Sigmoid colon (tissue), 7 donors: ENCODE measurements at regions of chr1 and their contacts with region 1.

Region 1: GRCh38 chr1:35377555-35377954 is 109.0 kb downstream of the ZMYM4 start:
- DNase-seq: no peak
- H3K4me3 ChIP-seq: no peak overlapping the region
- H3K27ac ChIP-seq: no peak overlapping the region
- H3K4me1 ChIP-seq: no peaks in the 10 kb centered on the region
- H3K27me3 ChIP-seq: no peaks in the 10 kb centered on the region
- CTCF ChIP-seq: no peak
- EP300 ChIP-seq: no peak
- POLR2A ChIP-seq: no peak

Region 2: DNA sequence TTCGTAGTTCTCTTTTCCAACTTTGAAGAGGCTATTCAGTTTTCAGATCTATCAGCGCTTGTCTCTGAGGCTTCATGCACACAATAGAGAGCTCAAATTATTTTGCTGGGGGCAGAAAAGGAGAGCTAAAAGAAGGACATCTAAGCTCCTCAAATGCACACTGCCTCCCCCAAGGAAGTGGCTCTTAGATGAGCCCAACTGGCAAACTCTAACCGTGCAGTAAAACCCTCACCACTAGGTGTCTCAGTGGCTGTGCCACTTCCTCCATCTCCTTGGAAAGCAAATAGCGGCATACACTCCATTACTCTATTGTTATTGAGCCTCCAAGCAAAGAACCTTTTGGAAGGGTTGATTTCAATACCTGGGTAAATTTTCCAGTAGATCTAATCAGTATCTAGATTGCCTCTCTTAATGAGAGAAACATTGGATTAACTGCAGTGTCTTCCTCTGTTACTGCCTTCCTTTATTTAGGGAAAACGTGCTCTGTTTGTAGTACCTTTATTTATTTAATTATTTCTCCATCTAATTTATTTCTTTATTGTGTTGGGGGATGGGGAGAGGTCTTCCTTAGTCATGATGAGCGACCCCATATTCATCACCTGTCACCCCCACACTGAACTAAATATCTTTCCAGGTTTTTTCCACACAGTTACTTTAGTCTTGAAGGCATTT is 175.4 kb before region 1 on chr1:
- intact Hi-C with region 1: loop called (anchors 5 kb)
- DNase-seq: peak; percentile 84
- H3K4me3 ChIP-seq: peak overlapping the region in 1 of 4 donors; percentile 4
- H3K27ac ChIP-seq: no peak overlapping the region
- H3K4me1 ChIP-seq: no peaks in the 10 kb centered on the region
- H3K27me3 ChIP-seq: no peaks in the 10 kb centered on the region
- CTCF ChIP-seq: peak; percentile 80 to 89 (median 89)
- EP300 ChIP-seq: no peak
- POLR2A ChIP-seq: no peak

Region 3: GRCh38 chr1:35319988-35320713 is 57.4 kb before region 1 on chr1:
- intact Hi-C with region 1: no loop called
- DNase-seq: no peak
- H3K4me3 ChIP-seq: no peak overlapping the region
- H3K27ac ChIP-seq: no peak overlapping the region
- H3K4me1 ChIP-seq: peaks cover 0 to 24% (median 13%) of the 10 kb centered on the region in 4 donors
- H3K27me3 ChIP-seq: no peaks in the 10 kb centered on the region
- CTCF ChIP-seq: no peak
- EP300 ChIP-seq: no peak
- POLR2A ChIP-seq: no peak